ENCODE measurements at regions of chr2 and their contacts with region 1.

Region 1: DNA sequence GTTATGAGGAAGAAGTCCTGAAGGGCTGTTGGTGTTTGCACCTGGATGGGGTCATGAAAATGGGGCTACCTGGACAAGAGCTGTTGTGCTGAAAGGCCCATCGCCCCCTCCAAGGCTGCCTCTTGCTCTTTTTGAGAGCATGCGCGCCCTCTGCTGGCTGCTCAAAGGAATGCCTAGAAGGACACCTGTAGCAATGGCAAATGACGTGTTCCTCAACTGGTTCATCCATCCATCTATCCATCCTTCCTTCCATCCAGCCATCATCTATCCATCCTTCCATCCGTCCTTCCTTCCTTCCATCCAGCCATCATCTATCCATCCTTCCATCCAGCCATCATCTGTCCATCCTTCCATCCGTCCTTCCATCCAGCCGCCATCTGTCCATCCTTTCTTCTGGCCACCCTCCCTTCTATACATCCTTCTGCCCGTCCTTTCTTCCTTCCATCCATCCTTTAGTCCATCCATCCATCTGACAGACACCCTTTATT is 17.2 kb upstream of the RPL31 start:
- DNase-seq: peak; percentile 89
- ATAC-seq: peak; percentile 85
- H3K4me3 Mint-ChIP-seq: no peak overlapping the region
- H3K27ac Mint-ChIP-seq: no peak overlapping the region
- H3K4me1 Mint-ChIP-seq: peaks cover 2% of the 10 kb centered on the region
- H3K27me3 Mint-ChIP-seq: peaks cover 2% of the 10 kb centered on the region

Region 2: GRCh38 chr2:100427628-100428258 is 557.2 kb before region 1 on chr2:
- CTCF ChIA-PET with region 1: no interaction called
- POLR2A ChIA-PET with region 1: no interaction called
- intact Hi-C with region 1: loop called in 1 of 2 experiments (anchors 10 kb)
- DNase-seq: peak; percentile 86
- ATAC-seq: peak; percentile 86
- H3K4me3 Mint-ChIP-seq: no peak overlapping the region
- H3K27ac Mint-ChIP-seq: no peak overlapping the region
- H3K4me1 Mint-ChIP-seq: peaks cover 6% of the 10 kb centered on the region
- H3K27me3 Mint-ChIP-seq: peaks cover 5% of the 10 kb centered on the region

Region 3: GRCh38 chr2:100571670-100572069 is 413.3 kb before region 1 on chr2:
- CTCF ChIA-PET with region 1: no interaction called
- POLR2A ChIA-PET with region 1: no interaction called
- intact Hi-C with region 1: no loop called
- DNase-seq: no peak
- ATAC-seq: no peak
- H3K4me3 Mint-ChIP-seq: no peak overlapping the region
- H3K27ac Mint-ChIP-seq: no peak overlapping the region
- H3K4me1 Mint-ChIP-seq: peaks cover 6% of the 10 kb centered on the region
- H3K27me3 Mint-ChIP-seq: no peaks in the 10 kb centered on the region

Region 4: GRCh38 chr2:100730346-100730745 is 254.6 kb before region 1 on chr2:
- CTCF ChIA-PET with region 1: interaction called, 13 read pairs
- POLR2A ChIA-PET with region 1: no interaction called
- intact Hi-C with region 1: loop called (anchors 1 kb)
- DNase-seq: peak; percentile 76
- ATAC-seq: peak; percentile 68
- H3K4me3 Mint-ChIP-seq: no peak overlapping the region
- H3K27ac Mint-ChIP-seq: no peak overlapping the region
- H3K4me1 Mint-ChIP-seq: peaks cover 5% of the 10 kb centered on the region
- H3K27me3 Mint-ChIP-seq: peaks cover 7% of the 10 kb centered on the region

Region 5: GRCh38 chr2:100818606-100819369 is 166.1 kb before region 1 on chr2:
- CTCF ChIA-PET with region 1: no interaction called
- POLR2A ChIA-PET with region 1: no interaction called
- intact Hi-C with region 1: loop called (anchors 10 kb)
- DNase-seq: peak; percentile 45
- ATAC-seq: peak; percentile 27
- H3K4me3 Mint-ChIP-seq: peak overlapping the region; percentile 72
- H3K27ac Mint-ChIP-seq: peak overlapping the region; percentile 72
- H3K4me1 Mint-ChIP-seq: peaks cover 24% of the 10 kb centered on the region
- H3K27me3 Mint-ChIP-seq: peaks cover 29% of the 10 kb centered on the region

Region 6: GRCh38 chr2:101018934-101019333 is 34.0 kb after region 1 on chr2:
- CTCF ChIA-PET with region 1: no interaction called
- POLR2A ChIA-PET with region 1: no interaction called
- intact Hi-C with region 1: no loop called
- DNase-seq: no peak
- ATAC-seq: no peak
- H3K4me3 Mint-ChIP-seq: no peak overlapping the region
- H3K27ac Mint-ChIP-seq: no peak overlapping the region
- H3K4me1 Mint-ChIP-seq: no peaks in the 10 kb centered on the region
- H3K27me3 Mint-ChIP-seq: no peaks in the 10 kb centered on the region

Measured in activated CD4-positive, alpha-beta T cell treated with anti-CD3 and anti-CD28 coated beads for 36 hours (primary cell).